ENCODE measurements at regions of chr16 and their contacts with region 1.

Region 1: GRCh38 chr16:75506567-75506966 is 11.3 kb upstream of the CHST6 start:
- DNase-seq: peak in 2 of 5 donors; percentile 58 to 66
- ATAC-seq: peak; percentile 36 to 83 (median 75)
- H3K4me3 ChIP-seq: no peak overlapping the region
- H3K27ac ChIP-seq: peak overlapping the region in 6 of 12 donors; percentile 14 to 67 (median 25)
- H3K4me1 ChIP-seq: peaks cover 0 to 12% (median under 1%) of the 10 kb centered on the region in 12 donors
- H3K27me3 ChIP-seq: no peaks in the 10 kb centered on the region
- CTCF ChIP-seq: no peak
- POLR2A ChIP-seq: no peak

Region 2: DNA sequence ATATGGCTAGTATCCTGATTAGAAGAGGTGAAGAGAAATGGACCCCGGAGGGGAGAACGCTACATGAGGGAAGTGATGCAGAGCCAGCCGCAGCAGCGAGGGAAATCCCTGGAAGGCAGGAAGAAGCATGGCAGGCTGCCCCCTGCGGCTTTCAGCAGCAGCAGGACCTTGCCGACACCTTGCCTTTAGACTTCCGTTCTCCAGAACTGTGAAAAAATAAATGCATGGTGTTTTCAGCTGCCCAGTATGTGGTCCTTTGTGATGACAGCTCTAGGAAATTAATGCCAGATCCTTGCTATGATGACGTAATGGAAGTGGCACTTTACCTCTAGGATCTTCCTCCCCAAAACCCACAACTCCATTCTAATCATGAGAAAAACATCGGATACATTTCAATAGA is 367.9 kb before region 1 on chr16:
- intact Hi-C with region 1: no loop called
- DNase-seq: no peak
- ATAC-seq: no peak
- H3K4me3 ChIP-seq: no peak overlapping the region
- H3K27ac ChIP-seq: no peak overlapping the region
- H3K4me1 ChIP-seq: no peaks in the 10 kb centered on the region
- H3K27me3 ChIP-seq: no peaks in the 10 kb centered on the region
- CTCF ChIP-seq: no peak
- POLR2A ChIP-seq: no peak

Region 3: DNA sequence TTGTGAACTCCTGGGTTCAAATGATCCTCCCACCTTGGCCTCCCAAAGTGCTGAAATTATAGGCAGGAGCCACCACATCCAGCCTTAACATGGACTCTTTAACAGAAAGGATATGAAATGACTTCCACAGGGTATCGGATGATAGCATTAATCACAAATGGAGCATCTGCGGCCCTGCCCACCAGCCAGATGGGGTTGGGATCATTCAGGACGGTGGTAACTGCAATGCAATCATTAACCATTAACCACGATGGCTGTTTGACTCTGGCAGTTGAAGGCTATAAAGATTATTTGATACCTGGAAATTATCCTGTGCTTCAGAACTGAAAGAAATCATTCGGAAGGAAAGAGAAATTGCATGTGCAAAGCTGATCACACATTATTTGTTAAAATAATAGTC is 34.7 kb after region 1 on chr16:
- intact Hi-C with region 1: loop called in 1 of 10 experiments (anchors 5 kb)
- DNase-seq: no peak
- ATAC-seq: no peak
- H3K4me3 ChIP-seq: no peak overlapping the region
- H3K27ac ChIP-seq: no peak overlapping the region
- H3K4me1 ChIP-seq: peaks cover 0 to 8% (median 1%) of the 10 kb centered on the region in 12 donors
- H3K27me3 ChIP-seq: no peaks in the 10 kb centered on the region
- CTCF ChIP-seq: no peak
- POLR2A ChIP-seq: no peak